Mucosa of descending colon (tissue), 3 donors: ENCODE measurements at regions of chr1 and their contacts with region 1.

Region 1: DNA sequence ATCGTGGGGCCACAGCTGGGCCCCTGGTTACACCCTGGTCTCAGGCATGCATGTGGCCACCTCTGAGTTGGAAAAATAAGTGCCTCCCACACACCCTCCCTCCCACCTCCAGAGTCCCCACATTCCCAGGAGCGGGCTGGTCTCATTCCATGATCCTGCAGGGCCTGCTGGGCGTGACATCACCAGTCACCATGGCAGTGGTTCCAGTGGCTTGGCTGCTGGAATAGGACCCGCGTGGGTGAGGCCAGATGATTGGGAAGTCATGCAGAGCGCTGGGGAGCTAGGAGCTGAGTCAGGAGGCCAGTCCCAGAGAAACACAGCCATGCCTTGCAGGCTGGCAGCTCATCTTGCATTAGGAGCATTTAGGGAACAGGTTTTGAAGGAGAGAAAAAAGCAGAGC is 125.4 kb upstream of the TMEM51 start:
- DNase-seq: peak in 1 of 3 donors; percentile 67
- ATAC-seq: no peak
- H3K4me3 ChIP-seq: no peak overlapping the region
- H3K4me1 ChIP-seq: peaks cover 6% of the 10 kb centered on the region
- CTCF ChIP-seq: no peak

Region 2: GRCh38 chr1:14923727-14924452 is 104.2 kb before region 1 on chr1:
- intact Hi-C with region 1: loop called in 1 of 2 experiments (anchors 10 kb)
- DNase-seq: peak; percentile 64 to 78 (median 76)
- ATAC-seq: peak; percentile 82
- H3K4me3 ChIP-seq: no peak overlapping the region
- H3K4me1 ChIP-seq: peaks cover 7% of the 10 kb centered on the region
- CTCF ChIP-seq: no peak

Region 3: GRCh38 chr1:15090373-15090772 is 62.3 kb after region 1 on chr1:
- intact Hi-C with region 1: no loop called
- DNase-seq: peak; percentile 87 to 90 (median 90)
- ATAC-seq: peak; percentile 100
- H3K4me3 ChIP-seq: no peak overlapping the region
- H3K4me1 ChIP-seq: peaks cover 8% of the 10 kb centered on the region
- CTCF ChIP-seq: no peak